Posterior vena cava (tissue), 2 donors: ENCODE measurements at regions of chr12 and their contacts with region 1.

Region 1: DNA sequence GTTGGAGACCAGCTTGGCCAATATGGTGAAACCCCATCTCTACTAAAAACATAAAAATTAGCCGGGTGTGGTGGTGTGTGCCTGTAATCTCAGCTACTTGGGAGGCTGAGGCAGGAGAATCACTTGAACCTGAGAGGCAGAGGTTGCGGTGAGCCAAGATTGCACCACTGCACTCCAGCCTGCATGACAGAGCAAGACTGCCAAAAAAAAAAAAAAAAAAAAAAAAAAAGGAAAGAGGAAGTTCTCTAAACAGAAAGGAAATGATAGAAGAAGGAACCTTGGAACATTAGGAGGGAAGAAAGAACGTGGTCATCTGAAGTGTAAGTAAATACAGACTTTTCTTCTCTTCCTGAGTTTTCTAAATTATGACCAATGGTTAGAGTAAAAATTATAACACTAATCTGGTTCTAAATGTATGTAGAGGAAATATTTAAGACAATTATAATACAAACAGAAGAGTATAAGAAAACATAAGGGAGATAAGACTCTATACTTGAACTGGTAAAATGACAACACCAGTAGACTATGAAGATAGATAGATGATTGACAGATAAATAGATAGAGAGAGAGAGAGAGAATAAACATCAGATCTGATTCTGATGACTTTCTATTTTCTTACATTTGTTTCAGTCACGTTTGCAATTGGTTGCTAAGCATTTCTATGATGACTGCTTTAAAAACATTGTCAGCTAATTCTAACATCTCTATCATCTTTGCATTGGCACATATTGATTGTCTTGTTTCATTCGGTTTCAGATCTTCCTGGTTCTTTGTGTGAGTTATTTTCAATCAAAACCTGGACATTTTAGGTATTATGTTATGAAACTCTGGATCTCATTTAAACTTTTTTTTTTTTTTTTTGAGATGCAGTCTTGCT is 12.9 kb upstream of the CORO1C start:
- DNase-seq: no peak

Region 2: DNA sequence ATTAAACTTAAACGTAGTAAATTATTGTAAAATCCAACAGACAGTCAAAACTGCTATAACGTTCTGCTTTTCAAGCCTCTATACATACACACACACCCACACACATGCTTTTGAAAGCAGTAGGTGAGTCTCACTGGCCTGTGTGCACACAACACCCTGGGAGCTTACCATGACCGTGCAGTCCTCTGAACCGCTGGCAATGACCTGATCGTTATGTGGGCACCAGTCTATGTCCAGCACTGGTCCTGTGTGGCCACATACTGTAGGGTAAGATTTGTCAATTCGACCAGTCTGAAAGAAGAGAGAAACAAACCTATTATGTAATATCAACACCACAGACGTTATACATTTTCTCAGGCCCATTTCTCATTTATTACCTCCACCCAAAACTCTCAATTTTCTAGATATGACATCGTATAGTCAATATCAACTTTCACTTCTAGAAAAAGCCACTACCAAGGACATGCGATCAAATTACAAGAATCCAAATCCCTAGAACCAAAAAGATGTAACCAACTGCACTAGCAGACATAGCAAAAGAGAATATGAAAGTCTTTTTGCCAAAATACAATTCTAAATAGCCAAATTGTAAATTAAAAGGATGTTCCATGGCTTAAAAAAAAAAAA is 66.0 kb before region 1 on chr12:
- intact Hi-C with region 1: no loop called
- DNase-seq: no peak

Region 3: GRCh38 chr12:108768591-108769500 is 24.6 kb after region 1 on chr12:
- intact Hi-C with region 1: loop called in 1 of 2 experiments (anchors 2 kb)
- DNase-seq: peak; percentile 86